ENCODE measurements at regions of chrX and their contacts with region 1.

Region 1: DNA sequence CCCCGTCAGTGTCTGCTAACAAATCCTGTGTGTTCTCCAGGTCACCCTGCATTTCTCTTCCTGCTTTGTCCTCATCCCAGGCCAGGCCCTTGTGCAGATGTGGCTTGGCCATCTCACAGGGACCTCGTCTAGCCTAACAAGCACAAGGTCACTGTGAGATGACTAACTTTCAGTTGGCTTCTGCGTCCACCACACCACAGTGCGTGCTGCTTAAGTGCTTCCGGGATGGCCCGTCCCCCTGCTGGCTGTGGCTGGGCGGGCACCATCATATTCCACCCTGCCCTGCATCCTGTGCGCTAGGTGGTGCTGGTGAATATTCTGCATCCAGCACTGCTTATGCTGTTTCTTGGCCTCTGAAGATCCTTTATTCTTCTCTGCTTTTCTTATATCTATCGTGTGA is 33.8 kb downstream of the RBBP7 start:
- DNase-seq: no peak
- H3K4me3 ChIP-seq: no peak overlapping the region
- H3K27ac ChIP-seq: peak overlapping the region in 1 of 59 donors; percentile 9
- H3K27me3 ChIP-seq: peaks cover 0 to 9% (median 0%) of the 10 kb centered on the region in 45 donors
- CTCF ChIP-seq: peak in 25 of 56 donors; percentile 5 to 51 (median 23)

Region 2: GRCh38 chrX:16436348-16437188 is 399.8 kb before region 1 on chrX:
- intact Hi-C with region 1: no loop called
- DNase-seq: peak in 9 of 10 donors; percentile 24 to 80 (median 62)
- H3K4me3 ChIP-seq: no peak overlapping the region
- H3K27ac ChIP-seq: no peak overlapping the region
- H3K27me3 ChIP-seq: peaks cover 0 to 75% (median 26%) of the 10 kb centered on the region in 45 donors
- CTCF ChIP-seq: peak in 55 of 56 donors; percentile 34 to 77 (median 60)

Region 3: DNA sequence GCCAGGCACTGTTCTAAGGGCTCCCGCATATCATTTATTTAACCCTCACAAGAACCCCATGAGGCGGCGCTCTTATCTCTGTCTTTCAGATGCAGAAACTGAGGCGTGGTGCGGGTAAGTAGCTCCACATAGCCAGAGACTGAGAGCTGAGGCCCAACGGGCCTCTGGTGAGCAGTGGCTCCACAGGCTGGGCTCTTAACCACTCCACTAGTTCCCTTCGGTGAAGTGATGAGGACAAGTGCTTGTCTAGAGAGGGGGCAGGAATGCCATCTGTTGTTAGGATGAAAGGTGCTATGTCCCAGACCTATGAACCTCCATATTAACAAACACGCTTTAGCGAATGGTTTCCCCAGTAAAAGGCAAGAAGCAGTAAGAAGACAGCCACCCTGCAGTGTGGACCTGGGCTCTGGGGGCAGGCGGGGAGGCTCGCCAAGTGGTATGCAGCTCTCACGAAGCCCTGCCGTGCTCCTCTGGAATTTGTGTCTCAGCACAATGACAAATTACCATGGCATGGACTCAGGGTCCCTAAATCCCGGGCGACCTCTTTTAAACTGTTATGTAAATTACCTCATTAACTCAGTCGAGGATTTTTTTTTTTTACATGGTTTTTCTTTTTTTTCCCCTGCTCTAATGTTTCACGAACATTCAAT is 207.3 kb before region 1 on chrX:
- intact Hi-C with region 1: no loop called
- DNase-seq: no peak
- H3K4me3 ChIP-seq: no peak overlapping the region
- H3K27ac ChIP-seq: no peak overlapping the region
- H3K27me3 ChIP-seq: peaks cover 0 to 80% (median 28%) of the 10 kb centered on the region in 45 donors
- CTCF ChIP-seq: no peak

Region 4: DNA sequence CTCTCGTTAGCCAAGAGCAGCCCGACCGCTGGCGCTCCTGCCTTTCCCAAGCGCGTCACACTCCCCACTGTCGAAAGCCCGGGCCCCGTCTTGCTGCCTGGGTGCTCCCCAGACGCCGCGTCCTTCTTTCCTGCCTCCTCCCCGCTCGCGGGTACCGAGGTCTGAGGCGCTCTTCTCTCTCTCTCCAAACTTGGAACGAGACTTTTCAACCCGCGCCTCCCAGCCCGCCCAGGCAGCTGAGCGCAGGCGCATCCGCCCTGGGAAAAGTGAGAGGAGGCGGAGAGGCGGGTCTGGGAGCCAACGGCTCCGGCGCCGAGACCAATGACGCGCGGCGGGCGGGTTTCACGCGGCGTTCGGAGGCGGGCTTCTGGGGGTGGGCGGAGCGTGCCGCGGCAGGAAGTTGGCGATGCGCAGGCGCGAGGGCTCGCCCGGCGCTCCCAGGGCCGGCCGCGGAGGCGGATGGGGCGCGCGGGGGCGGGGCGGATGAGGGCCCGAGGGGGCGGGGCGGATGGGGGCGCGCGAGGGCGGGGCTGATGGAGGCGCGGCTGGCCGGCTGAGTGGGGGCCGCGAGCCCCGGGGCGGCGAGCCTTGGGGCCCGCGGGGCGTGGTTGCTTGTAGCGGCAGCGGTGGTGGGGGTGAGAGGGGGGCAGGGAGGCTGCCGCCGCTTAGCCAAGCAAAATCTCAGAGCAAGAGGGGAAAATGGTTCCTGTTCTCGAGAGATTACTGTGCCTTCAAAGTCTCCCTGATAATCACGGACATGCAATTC is 33.9 kb after region 1 on chrX and contains the start of gene RBBP7:
- intact Hi-C with region 1: loop called in 1 of 2 experiments (anchors 5 kb)
- DNase-seq: peak; percentile 83 to 96 (median 88)
- H3K4me3 ChIP-seq: peak within 1 kb of the TSS; percentile 34 to 80 (median 68)
- H3K27ac ChIP-seq: peak within 1 kb of the TSS; percentile 77 to 98 (median 93)
- H3K27me3 ChIP-seq: peaks cover 0 to 86% (median 37%) of the 10 kb centered on the region in 45 donors
- CTCF ChIP-seq: peak in 1 of 56 donors; percentile 3
- total RNA-seq, gene RBBP7: 52.6 to 124 (median 81.9) TPM

Measured in dorsolateral prefrontal cortex (tissue), 120 donors.